Endothelial cell of umbilical vein (primary cell): ENCODE measurements at regions of chr4 and their contacts with region 1.

Region 1: DNA sequence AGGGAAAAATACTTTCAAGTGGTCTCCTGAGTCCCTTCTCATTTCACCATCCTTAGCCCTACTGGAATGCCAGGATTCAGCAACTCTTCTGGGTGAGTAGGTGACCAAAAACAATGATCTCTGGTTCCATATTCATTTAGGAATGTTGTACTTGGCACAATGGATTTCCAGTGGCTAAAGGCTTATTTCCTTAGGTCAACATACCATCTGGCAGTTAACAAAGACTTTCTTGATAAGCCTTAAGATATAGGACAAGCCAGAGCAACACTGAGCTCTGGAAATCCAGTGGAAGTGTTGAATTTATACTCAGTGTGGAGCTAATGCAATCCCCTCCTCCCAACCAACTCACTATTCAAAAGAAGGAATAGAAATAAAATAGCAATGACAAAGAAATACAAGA is 139.4 kb upstream of the EMCN start:
- DNase-seq: peak; percentile 97
- H3K4me3 ChIP-seq: no peak overlapping the region
- H3K27ac ChIP-seq: peak overlapping the region; percentile 76
- H3K4me1 ChIP-seq: peaks cover 28% of the 10 kb centered on the region
- H3K27me3 ChIP-seq: no peaks in the 10 kb centered on the region
- CTCF ChIP-seq: no peak
- POLR2A ChIP-seq: peak; percentile 52

Region 2: DNA sequence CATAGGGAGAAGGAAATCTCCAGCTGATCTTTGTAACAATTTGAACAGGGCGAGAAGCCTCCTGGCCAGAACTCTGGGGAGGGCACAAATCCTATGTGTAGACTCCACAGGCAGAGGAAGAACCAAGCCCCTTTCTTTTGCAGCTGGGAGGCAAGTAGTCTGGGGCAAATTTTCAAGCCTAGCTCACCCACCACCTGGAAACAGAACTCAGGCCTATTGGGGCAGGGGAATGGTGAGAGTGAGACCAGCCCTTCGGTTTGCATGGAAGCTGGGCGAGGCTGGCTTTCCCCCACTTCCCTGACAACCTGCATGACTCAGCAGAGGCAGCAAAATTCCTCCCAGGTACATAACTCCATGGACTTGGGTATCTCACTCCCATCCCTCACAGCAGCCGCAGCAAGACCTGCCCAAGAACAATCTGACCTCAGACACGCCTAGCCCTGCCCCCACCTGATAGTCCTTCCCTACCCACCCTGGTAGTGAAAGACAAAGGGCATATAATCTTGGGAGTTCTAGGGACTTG is 277.5 kb before region 1 on chr4:
- CTCF ChIA-PET with region 1: no interaction called
- POLR2A ChIA-PET with region 1: no interaction called
- dilution Hi-C with region 1: no loop called
- intact Hi-C with region 1: no loop called
- DNase-seq: no peak
- H3K4me3 ChIP-seq: no peak overlapping the region
- H3K27ac ChIP-seq: no peak overlapping the region
- H3K4me1 ChIP-seq: no peaks in the 10 kb centered on the region
- H3K27me3 ChIP-seq: no peaks in the 10 kb centered on the region
- CTCF ChIP-seq: no peak
- POLR2A ChIP-seq: no peak

Region 3: GRCh38 chr4:100421361-100421978 is 235.7 kb before region 1 on chr4:
- CTCF ChIA-PET with region 1: no interaction called
- POLR2A ChIA-PET with region 1: no interaction called
- dilution Hi-C with region 1: no loop called
- intact Hi-C with region 1: loop called (anchors 2 kb)
- DNase-seq: peak; percentile 73
- H3K4me3 ChIP-seq: no peak overlapping the region
- H3K27ac ChIP-seq: peak overlapping the region; percentile 43
- H3K4me1 ChIP-seq: peaks cover 18% of the 10 kb centered on the region
- H3K27me3 ChIP-seq: no peaks in the 10 kb centered on the region
- CTCF ChIP-seq: peak; percentile 30 to 44
- POLR2A ChIP-seq: no peak

Region 4: GRCh38 chr4:100517864-100518341 is 139.3 kb before region 1 on chr4 and contains the start of gene EMCN:
- CTCF ChIA-PET with region 1: no interaction called
- POLR2A ChIA-PET with region 1: no interaction called
- dilution Hi-C with region 1: no loop called
- intact Hi-C with region 1: loop called (anchors 1 kb)
- DNase-seq: peak; percentile 90
- H3K4me3 ChIP-seq: peak within 1 kb of the TSS; percentile 39 to 99 (median 54)
- H3K27ac ChIP-seq: peak within 1 kb of the TSS; percentile 70
- H3K4me1 ChIP-seq: peaks cover 41% of the 10 kb centered on the region
- H3K27me3 ChIP-seq: no peaks in the 10 kb centered on the region
- CTCF ChIP-seq: no peak
- POLR2A ChIP-seq: peak; percentile 56
- total RNA-seq, gene EMCN: 76.2 and 97.3 TPM in 2 replicates

Region 5: GRCh38 chr4:100539706-100540105 is 117.5 kb before region 1 on chr4:
- CTCF ChIA-PET with region 1: no interaction called
- POLR2A ChIA-PET with region 1: no interaction called
- dilution Hi-C with region 1: no loop called
- intact Hi-C with region 1: loop called (anchors 10 kb)
- DNase-seq: peak; percentile 65
- H3K4me3 ChIP-seq: no peak overlapping the region
- H3K27ac ChIP-seq: peak overlapping the region; percentile 7
- H3K4me1 ChIP-seq: peaks cover 15% of the 10 kb centered on the region
- H3K27me3 ChIP-seq: no peaks in the 10 kb centered on the region
- CTCF ChIP-seq: no peak
- POLR2A ChIP-seq: no peak

Region 6: GRCh38 chr4:100695039-100695654 is 38.0 kb after region 1 on chr4:
- CTCF ChIA-PET with region 1: interaction called, 6 read pairs
- POLR2A ChIA-PET with region 1: interaction called, 3 read pairs
- dilution Hi-C with region 1: no loop called
- intact Hi-C with region 1: loop called (anchors 1 kb)
- DNase-seq: peak; percentile 95
- H3K4me3 ChIP-seq: no peak overlapping the region
- H3K27ac ChIP-seq: no peak overlapping the region
- H3K4me1 ChIP-seq: peaks cover 26% of the 10 kb centered on the region
- H3K27me3 ChIP-seq: no peaks in the 10 kb centered on the region
- CTCF ChIP-seq: no peak
- POLR2A ChIP-seq: peak; percentile 67

Region 7: GRCh38 chr4:100736641-100737451 is 79.7 kb after region 1 on chr4:
- CTCF ChIA-PET with region 1: interaction called, 5 read pairs
- POLR2A ChIA-PET with region 1: no interaction called
- dilution Hi-C with region 1: no loop called
- intact Hi-C with region 1: loop called (anchors 1 kb)
- DNase-seq: peak; percentile 97
- H3K4me3 ChIP-seq: no peak overlapping the region
- H3K27ac ChIP-seq: peak overlapping the region; percentile 83
- H3K4me1 ChIP-seq: peaks cover 27% of the 10 kb centered on the region
- H3K27me3 ChIP-seq: no peaks in the 10 kb centered on the region
- CTCF ChIP-seq: no peak
- POLR2A ChIP-seq: peak; percentile 42

Region 8: DNA sequence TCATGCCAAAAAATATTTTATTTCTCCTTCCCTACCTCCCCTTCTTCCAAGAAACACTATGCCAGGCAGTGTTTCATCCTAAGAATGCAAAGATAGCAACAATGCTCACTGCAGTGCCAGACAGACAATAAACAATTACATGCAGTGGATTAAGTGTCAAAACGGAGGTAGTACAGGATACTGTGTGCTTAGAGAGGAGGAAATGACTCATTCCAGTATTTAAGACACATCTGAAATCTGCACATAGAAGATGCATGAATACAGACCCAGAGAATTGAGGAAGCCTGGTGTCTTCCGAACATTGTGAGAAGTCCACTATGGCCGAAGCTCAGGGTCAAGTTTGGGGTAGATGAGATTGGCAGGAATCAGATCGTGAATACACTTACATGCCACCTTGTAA is 363.8 kb after region 1 on chr4:
- CTCF ChIA-PET with region 1: no interaction called
- POLR2A ChIA-PET with region 1: no interaction called
- dilution Hi-C with region 1: no loop called
- intact Hi-C with region 1: loop called (anchors 10 kb)
- DNase-seq: peak; percentile 94
- H3K4me3 ChIP-seq: no peak overlapping the region
- H3K27ac ChIP-seq: peak overlapping the region; percentile 88
- H3K4me1 ChIP-seq: peaks cover 35% of the 10 kb centered on the region
- H3K27me3 ChIP-seq: no peaks in the 10 kb centered on the region
- CTCF ChIP-seq: no peak
- POLR2A ChIP-seq: no peak

Region 9: DNA sequence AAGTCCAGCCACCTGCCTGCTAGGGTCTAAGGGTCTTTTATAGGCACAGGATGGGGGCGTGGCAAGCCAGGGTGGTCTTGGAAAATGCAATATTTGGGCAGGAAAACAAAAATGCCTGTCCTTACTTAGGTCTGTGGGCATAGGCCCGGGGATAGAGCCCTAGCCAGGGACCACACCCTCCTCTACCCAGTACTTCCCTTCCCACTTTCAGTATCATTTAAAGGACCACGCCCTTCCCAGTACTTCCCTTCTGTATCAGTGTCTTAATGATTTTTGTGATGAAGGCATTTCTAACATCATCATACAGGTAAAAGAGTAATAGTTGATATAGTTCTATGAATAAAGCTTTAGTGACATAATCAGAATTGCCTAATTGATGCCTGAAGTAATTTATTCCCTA is 1144.8 kb after region 1 on chr4:
- CTCF ChIA-PET with region 1: no interaction called
- POLR2A ChIA-PET with region 1: no interaction called
- dilution Hi-C with region 1: no loop called
- intact Hi-C with region 1: no loop called
- DNase-seq: no peak
- H3K4me3 ChIP-seq: no peak overlapping the region
- H3K27ac ChIP-seq: no peak overlapping the region
- H3K4me1 ChIP-seq: no peaks in the 10 kb centered on the region
- H3K27me3 ChIP-seq: no peaks in the 10 kb centered on the region
- CTCF ChIP-seq: no peak
- POLR2A ChIP-seq: no peak